ENCODE measurements at regions of chr13 and their contacts with region 1.

Region 1: DNA sequence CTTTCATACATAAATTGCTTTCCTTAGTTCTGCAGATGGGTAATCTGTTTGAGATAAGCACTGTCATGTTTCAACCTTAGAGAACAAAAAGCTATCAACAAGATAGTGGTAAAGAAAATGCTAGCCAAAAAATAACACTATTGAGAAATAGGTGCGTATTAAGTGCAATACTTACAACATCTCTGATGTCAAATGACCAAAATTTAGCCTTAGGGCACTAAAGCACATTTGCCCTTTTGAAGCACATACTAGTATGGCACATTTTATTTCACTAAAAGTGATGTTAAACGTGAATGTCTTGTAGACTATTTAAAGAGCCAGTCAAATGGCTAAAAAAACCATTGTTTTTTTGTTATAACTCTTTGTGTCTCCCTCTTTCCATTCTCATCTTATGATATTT is 4.9 kb downstream of the KBTBD6 start:
- DNase-seq: no peak

Region 2: DNA sequence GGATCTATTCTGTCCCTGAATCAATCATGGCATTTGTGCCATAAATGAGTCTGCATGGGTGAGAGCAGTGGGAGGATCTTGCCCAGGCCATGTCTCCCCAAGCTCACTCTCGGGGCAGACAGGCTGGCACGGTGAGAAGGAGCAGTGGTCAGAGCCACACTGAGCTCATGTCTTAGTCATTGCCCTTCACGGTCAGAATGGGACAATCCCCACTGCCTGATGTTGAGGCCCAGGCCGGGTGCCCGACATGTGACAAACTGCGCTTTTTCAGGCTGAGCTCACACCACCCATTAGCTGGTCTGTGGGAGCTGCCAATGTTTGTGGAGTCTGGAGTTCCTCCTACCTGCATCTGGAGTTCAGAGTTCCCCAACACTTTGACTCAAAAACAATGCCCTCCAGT is 990.3 kb before region 1 on chr13:
- intact Hi-C with region 1: loop called in 1 of 2 experiments (anchors 5 kb)
- DNase-seq: no peak